ENCODE measurements at regions of chr6 and their contacts with region 1.

Region 1: GRCh38 chr6:56708810-56709597 is 66.3 kb upstream of the DST start:
- DNase-seq: peak; percentile 39
- H3K4me3 ChIP-seq: peak overlapping the region; percentile 12 to 50; a peak in 3 of 4 replicates
- H3K27ac ChIP-seq: peak overlapping the region; percentile 64 to 93
- H3K4me1 ChIP-seq: peaks cover 2 to 33% of the 10 kb centered on the region in 2 experiments
- H3K27me3 ChIP-seq: no peaks in the 10 kb centered on the region
- CTCF ChIP-seq: peak; percentile 80
- EP300 ChIP-seq: peak in 1 of 2 experiments; percentile 76; a peak in 2 of 4 replicates
- RAD21 ChIP-seq: peak; percentile 71

Region 2: DNA sequence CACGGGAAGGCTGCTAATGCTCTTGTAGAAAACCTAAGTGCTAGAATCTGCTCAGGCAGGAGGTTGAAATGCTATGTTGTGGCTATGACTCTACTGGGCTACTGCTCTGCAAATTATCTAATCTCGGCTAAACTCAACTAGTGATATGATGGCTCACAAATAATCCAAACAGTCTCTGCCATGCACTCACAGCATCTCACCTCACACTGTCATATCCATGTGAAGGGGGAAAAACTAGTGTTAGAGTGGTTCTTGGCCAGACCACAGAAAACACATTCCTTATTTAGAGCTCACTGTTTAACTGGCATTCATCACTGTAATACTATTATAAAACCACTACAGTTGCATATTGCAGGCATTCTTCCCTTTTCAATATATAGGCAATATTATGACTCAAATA is 15.5 kb after region 1 on chr6:
- CTCF ChIA-PET with region 1: interaction called, 14 read pairs
- POLR2A ChIA-PET with region 1: no interaction called
- DNase-seq: no peak
- H3K4me3 ChIP-seq: no peak overlapping the region
- H3K27ac ChIP-seq: peak overlapping the region; percentile 44 to 50; a peak in 3 of 4 replicates
- H3K4me1 ChIP-seq: peaks cover 4 to 56% of the 10 kb centered on the region in 2 experiments; a peak in 3 of 4 replicates
- H3K27me3 ChIP-seq: no peaks in the 10 kb centered on the region
- CTCF ChIP-seq: no peak
- EP300 ChIP-seq: no peak
- RAD21 ChIP-seq: no peak

Region 3: DNA sequence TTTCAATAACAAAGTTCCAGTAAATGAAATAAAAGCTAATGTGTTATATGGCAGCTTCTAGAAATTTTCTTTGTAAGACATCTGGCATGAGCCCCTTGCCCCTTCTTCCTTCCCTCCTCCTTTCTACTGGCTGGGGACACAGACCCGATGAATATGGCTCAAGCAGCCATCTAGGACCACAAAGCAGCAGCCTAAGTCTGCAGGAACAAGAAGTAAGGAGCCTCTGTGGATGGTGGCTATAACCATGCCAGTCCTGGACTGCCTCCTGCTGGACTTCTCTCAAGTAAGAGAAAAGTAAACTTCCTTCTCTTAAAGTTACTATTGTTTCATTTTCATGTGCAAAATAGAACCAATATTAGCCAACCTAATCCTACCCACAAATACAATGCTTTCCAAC is 48.6 kb after region 1 on chr6:
- CTCF ChIA-PET with region 1: interaction called, 10 read pairs
- POLR2A ChIA-PET with region 1: interaction called, 3 read pairs
- DNase-seq: no peak
- H3K4me3 ChIP-seq: no peak overlapping the region
- H3K27ac ChIP-seq: peak overlapping the region in 1 of 2 experiments; percentile 41; a peak in 1 of 4 replicates
- H3K4me1 ChIP-seq: peaks cover 13 to 57% of the 10 kb centered on the region in 2 experiments
- H3K27me3 ChIP-seq: no peaks in the 10 kb centered on the region
- CTCF ChIP-seq: peak; percentile 59
- EP300 ChIP-seq: no peak
- RAD21 ChIP-seq: peak; percentile 62

Region 4: GRCh38 chr6:56843573-56844349 is 134.8 kb after region 1 on chr6:
- CTCF ChIA-PET with region 1: interaction called, 39 read pairs
- POLR2A ChIA-PET with region 1: no interaction called
- DNase-seq: peak; percentile 91
- H3K4me3 ChIP-seq: peak overlapping the region; percentile 80 to 95
- H3K27ac ChIP-seq: peak overlapping the region; percentile 69 to 92
- H3K4me1 ChIP-seq: peaks cover 12 to 17% of the 10 kb centered on the region in 2 experiments; a peak in 3 of 4 replicates
- H3K27me3 ChIP-seq: no peaks in the 10 kb centered on the region
- CTCF ChIP-seq: peak; percentile 69; the same call in 1 of the 2 replicates
- EP300 ChIP-seq: no peak; a peak in 1 of 4 replicates
- RAD21 ChIP-seq: peak; percentile 63